ENCODE measurements at regions of chr6 and their contacts with region 1.

Region 1: DNA sequence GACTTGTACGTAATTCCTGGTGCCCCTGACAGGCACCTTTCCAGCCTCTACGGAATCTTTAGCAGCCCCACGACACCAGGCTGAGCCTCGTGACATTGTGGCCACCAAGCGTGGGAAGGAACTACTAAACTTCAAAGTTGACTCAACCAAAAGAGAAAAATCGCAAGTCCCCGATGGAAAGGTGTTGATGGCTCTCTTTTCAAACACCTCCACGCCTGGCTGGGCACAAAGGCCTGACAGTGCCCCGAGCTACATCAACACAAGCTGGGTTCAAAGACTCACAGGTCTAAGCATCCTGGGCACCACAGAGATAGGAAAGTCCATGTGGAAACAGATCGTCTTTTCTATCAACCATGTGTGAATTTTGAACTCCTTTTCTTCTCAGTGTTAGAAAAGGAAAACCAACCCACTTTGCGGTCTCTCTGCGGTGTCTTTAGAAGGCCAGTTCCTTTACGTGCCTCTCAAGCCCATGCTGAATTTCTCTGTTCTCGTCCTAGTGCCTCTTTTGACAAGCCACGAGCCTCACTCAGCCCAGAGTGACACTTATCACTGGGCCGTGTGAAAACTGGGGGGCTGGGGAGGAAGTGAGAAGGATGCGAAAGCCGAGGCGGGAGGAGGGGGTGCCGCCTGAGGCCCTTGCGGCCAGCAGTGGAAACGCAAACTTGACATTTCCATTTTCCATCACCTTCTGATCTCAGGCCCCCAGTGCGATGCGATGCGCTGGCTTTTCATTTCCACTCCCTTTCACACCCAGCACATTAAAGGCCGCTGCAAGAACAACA is 59.4 kb downstream of the GFOD1 start:
- DNase-seq: peak; percentile 89
- ATAC-seq: peak; percentile 72
- H3K4me3 Mint-ChIP-seq: peak overlapping the region; percentile 61
- H3K27ac Mint-ChIP-seq: peak overlapping the region; percentile 92
- H3K4me1 Mint-ChIP-seq: peaks cover 72% of the 10 kb centered on the region
- H3K27me3 Mint-ChIP-seq: no peaks in the 10 kb centered on the region

Region 2: DNA sequence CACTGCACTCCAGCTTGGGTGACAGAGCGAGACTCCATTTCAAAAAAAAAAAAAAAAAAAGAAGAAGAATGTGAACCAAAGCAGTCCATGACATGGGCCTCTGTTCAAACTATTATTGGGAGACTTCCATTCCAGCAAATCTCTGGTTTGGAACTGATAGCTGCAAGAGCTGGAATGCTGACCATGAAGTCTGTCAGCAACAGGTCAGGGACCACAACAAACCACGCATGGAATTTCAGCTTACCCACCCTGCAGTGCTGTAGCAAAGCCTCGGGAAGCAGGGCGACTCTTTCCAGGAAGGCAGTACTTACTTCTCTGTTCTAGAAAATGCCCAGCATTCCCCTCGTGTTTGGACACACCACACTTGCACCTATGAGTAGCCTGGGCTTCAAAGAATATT is 65.6 kb before region 1 on chr6:
- CTCF ChIA-PET with region 1: no interaction called
- DNase-seq: no peak
- ATAC-seq: no peak
- H3K4me3 Mint-ChIP-seq: no peak overlapping the region
- H3K27ac Mint-ChIP-seq: no peak overlapping the region
- H3K4me1 Mint-ChIP-seq: peaks cover 10% of the 10 kb centered on the region
- H3K27me3 Mint-ChIP-seq: peaks cover 2% of the 10 kb centered on the region

Region 3: DNA sequence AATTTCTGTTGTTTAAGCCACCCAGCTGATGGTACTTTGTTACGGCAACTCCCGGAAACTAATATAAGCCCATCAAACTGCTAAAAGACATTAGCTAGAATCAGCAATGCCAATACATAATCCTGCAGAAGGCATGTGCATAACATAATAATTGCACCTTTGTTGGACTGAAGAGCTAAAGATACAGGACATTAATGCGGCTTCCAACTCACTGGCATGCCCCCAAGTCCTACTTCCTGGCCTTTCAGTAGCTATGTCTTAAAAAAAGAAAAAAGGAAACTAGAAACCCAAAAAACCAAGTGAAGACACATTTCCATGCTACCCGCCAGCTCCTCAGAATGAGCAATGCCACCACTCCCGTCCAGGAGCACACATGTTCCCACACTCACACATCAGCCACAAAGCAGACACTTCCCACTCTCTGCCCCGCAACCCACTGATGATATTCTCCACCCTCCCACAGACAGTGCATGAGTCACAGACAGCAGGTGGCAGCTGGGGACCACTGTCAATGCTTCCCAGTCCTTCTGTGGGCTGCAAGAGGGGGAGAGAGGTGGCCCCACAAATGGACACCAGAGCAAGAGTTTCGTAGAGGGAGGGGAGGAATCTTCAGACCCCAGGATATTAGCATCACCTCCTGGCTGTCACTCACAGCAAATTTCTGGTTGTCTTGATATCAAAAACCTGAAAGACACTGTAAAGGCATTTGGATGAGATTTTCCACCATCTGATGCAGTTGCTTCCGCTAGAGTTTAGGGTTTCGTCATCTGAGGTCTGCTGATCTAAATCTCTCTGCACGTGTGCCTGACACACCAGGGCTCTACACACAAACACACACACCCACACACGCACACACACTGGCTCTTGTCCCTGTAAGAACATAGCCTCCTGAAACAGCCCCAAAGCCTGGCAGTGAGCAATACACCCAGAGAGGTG is 26.6 kb after region 1 on chr6:
- CTCF ChIA-PET with region 1: interaction called, 13 read pairs
- DNase-seq: peak; percentile 78
- ATAC-seq: peak; percentile 69
- H3K4me3 Mint-ChIP-seq: peak overlapping the region; percentile 58
- H3K27ac Mint-ChIP-seq: peak overlapping the region; percentile 91
- H3K4me1 Mint-ChIP-seq: peaks cover 41% of the 10 kb centered on the region
- H3K27me3 Mint-ChIP-seq: no peaks in the 10 kb centered on the region

Region 4: GRCh38 chr6:13494137-13494536 is 66.1 kb after region 1 on chr6:
- CTCF ChIA-PET with region 1: no interaction called
- DNase-seq: no peak
- ATAC-seq: no peak
- H3K4me3 Mint-ChIP-seq: no peak overlapping the region
- H3K27ac Mint-ChIP-seq: no peak overlapping the region
- H3K4me1 Mint-ChIP-seq: no peaks in the 10 kb centered on the region
- H3K27me3 Mint-ChIP-seq: peaks cover 2% of the 10 kb centered on the region

Region 5: GRCh38 chr6:13624871-13625288 is 196.9 kb after region 1 on chr6:
- CTCF ChIA-PET with region 1: no interaction called
- DNase-seq: no peak
- ATAC-seq: peak; percentile 78
- H3K4me3 Mint-ChIP-seq: no peak overlapping the region
- H3K27ac Mint-ChIP-seq: peak overlapping the region; percentile 13
- H3K4me1 Mint-ChIP-seq: peaks cover 11% of the 10 kb centered on the region
- H3K27me3 Mint-ChIP-seq: no peaks in the 10 kb centered on the region